A549 (cell line): ENCODE measurements at regions of chr2 and their contacts with region 1.

Region 1: DNA sequence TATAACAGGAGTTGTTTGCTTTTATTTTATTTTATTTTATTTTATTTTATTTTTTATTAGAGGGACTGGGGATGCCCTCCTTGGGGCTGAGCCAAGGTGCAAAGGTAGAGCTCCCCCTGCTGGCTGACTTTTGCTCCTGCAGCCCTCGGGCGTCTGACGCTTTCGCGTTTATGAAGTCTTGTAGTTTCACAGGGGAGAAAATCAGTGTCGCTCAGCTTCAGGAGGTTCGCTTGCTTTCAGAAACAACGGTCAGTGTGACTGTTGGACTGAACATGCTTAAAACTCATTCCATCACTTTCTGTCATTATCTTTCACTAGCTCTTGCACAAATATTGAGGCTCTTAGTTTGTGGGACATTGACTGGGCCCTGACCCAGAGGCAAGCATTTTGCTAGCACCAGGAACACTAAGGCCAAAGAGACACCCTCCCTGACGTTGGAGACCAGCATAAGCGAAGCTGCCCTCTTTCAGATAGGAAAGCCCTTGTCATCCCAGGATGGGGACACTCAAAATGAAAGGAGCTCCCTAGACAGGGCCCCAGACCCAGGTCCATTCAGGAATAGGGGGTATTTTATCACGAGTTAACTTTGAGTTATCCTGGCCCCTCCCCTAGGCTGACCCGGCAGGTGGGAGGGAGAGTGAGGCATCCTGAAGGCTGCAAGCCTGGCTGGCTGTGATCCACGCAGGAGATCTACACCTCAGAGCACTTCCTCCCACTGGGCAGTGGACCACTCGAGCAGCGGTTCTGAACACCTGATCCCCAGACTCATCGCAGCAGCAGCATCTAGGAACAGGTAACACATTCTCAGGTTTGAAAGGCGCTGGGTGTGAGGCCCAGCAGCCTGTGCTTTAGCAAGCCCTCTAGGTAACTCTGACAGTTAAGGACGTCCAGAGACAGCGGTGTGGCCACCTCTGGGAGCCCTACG is 34.4 kb downstream of the LGALSL start:
- DNase-seq: peak; percentile 71 to 73
- ATAC-seq: peak; percentile 60 to 91; a peak in 4 of 6 replicates
- H3K4me3 ChIP-seq: no peak overlapping the region
- H3K27ac ChIP-seq: no peak overlapping the region
- H3K4me1 ChIP-seq: no peaks in the 10 kb centered on the region
- CTCF ChIP-seq: peak; percentile 99
- EP300 ChIP-seq: no peak
- POLR2A ChIP-seq: no peak
- RAD21 ChIP-seq: peak; percentile 85 to 89

Region 2: DNA sequence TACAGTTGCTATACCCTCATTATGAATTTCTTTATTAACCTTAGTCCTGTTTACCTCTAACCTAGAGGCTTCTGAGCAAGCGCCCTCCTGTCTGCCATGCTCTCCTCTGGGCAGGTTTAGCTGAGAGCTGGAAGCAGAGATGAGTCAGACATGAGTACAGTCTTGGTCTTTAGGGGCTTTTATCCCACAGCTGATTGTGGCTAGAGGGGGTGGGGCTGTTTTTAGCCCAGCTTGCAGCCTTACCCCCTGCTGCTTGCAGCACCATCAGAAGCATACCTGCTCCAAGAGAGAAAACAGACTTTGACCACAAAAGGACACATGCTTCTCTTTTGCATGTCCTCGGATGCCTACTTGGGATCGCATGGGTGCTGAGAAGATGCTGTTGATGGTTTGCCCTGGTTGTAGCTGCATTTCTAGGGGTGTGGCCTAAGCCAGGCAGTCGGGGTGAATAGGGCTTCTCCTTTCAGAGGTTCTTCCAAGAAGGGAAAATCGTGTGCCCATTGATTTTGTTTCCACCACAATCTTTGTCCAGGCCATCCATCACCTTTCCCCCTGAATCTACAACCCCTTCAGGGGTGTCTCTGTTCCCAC is 149.3 kb before region 1 on chr2:
- CTCF ChIA-PET with region 1: interaction called, 24 read pairs
- POLR2A ChIA-PET with region 1: no interaction called
- DNase-seq: no peak
- ATAC-seq: no peak
- H3K4me3 ChIP-seq: no peak overlapping the region
- H3K27ac ChIP-seq: no peak overlapping the region
- H3K4me1 ChIP-seq: no peaks in the 10 kb centered on the region
- CTCF ChIP-seq: no peak
- EP300 ChIP-seq: no peak
- POLR2A ChIP-seq: no peak
- RAD21 ChIP-seq: no peak

Region 3: DNA sequence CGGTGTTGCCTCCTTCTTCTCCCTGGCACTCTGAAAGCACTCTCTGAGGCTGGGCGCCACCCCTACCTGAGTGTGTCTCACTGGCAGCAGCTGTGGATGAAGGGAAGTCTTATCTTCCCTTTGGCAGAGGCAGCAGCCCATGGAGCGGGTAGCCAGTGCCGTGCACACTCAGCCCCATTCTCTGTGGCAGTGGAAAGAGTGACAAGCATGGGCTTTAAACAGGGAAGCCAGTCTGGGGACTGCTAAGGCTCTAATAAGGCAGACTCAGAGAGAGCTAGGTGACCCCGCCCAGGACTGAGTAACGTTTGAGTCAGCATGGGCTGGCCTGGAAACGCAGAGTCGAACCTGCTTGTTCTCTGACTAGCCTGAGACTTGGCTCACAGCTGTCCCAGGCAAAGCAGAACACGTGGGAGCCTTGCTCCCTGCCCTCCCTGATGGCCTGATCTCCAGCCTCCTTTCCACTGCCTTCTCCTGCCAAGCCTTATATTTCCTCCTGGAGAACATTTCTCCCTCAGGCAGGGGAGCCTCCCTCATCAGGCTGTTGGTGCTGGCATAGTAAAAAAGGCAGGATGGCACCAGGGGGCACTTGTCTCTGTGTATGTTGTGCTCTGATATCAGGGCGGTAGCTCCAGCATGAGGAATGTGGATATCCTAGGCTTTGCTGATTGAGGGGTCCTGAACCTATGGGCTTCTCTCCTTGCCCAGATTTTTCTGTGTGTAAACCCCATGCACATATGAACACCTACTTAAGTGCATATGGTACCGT is 128.2 kb before region 1 on chr2:
- CTCF ChIA-PET with region 1: interaction called, 23 read pairs
- POLR2A ChIA-PET with region 1: no interaction called
- DNase-seq: peak; percentile 82
- ATAC-seq: peak; percentile 96 to 98
- H3K4me3 ChIP-seq: no peak overlapping the region
- H3K27ac ChIP-seq: peak overlapping the region; percentile 37 to 75; a peak in 5 of 6 replicates
- H3K4me1 ChIP-seq: peaks cover 18% of the 10 kb centered on the region
- CTCF ChIP-seq: peak; percentile 21; the same call in 1 of the 3 replicates
- EP300 ChIP-seq: no peak
- POLR2A ChIP-seq: no peak
- RAD21 ChIP-seq: peak in 1 of 2 experiments; percentile 15; a peak in 2 of 5 replicates

Region 4: GRCh38 chr2:64463781-64464180 is 24.5 kb before region 1 on chr2:
- CTCF ChIA-PET with region 1: interaction called, 92 read pairs
- POLR2A ChIA-PET with region 1: no interaction called
- DNase-seq: no peak
- ATAC-seq: peak; percentile 33 to 53; a peak in 4 of 6 replicates
- H3K4me3 ChIP-seq: no peak overlapping the region
- H3K27ac ChIP-seq: no peak overlapping the region
- H3K4me1 ChIP-seq: no peaks in the 10 kb centered on the region
- CTCF ChIP-seq: no peak
- EP300 ChIP-seq: no peak
- POLR2A ChIP-seq: no peak
- RAD21 ChIP-seq: no peak

Region 5: GRCh38 chr2:64516628-64517510 is 28.6 kb after region 1 on chr2:
- CTCF ChIA-PET with region 1: interaction called, 26 read pairs
- POLR2A ChIA-PET with region 1: no interaction called
- DNase-seq: no peak
- ATAC-seq: peak; percentile 49 to 58; a peak in 4 of 6 replicates
- H3K4me3 ChIP-seq: no peak overlapping the region
- H3K27ac ChIP-seq: peak overlapping the region in 1 of 2 experiments; percentile 17; a peak in 1 of 6 replicates
- H3K4me1 ChIP-seq: peaks cover 5% of the 10 kb centered on the region; the same call in 1 of the 3 replicates
- CTCF ChIP-seq: no peak
- EP300 ChIP-seq: no peak
- POLR2A ChIP-seq: no peak
- RAD21 ChIP-seq: no peak

Region 6: GRCh38 chr2:65377556-65378192 is 889.4 kb after region 1 on chr2:
- CTCF ChIA-PET with region 1: no interaction called
- POLR2A ChIA-PET with region 1: no interaction called
- DNase-seq: peak in 1 of 2 experiments; percentile 56
- ATAC-seq: peak; percentile 73 to 81
- H3K4me3 ChIP-seq: no peak overlapping the region
- H3K27ac ChIP-seq: peak overlapping the region in 1 of 2 experiments; percentile 50; a peak in 4 of 6 replicates
- H3K4me1 ChIP-seq: peaks cover 73% of the 10 kb centered on the region
- CTCF ChIP-seq: no peak
- EP300 ChIP-seq: no peak
- POLR2A ChIP-seq: no peak
- RAD21 ChIP-seq: no peak